Esophagus muscularis mucosa (tissue), 4 donors: ENCODE measurements at regions of chr11 and their contacts with region 1.

Region 1: DNA sequence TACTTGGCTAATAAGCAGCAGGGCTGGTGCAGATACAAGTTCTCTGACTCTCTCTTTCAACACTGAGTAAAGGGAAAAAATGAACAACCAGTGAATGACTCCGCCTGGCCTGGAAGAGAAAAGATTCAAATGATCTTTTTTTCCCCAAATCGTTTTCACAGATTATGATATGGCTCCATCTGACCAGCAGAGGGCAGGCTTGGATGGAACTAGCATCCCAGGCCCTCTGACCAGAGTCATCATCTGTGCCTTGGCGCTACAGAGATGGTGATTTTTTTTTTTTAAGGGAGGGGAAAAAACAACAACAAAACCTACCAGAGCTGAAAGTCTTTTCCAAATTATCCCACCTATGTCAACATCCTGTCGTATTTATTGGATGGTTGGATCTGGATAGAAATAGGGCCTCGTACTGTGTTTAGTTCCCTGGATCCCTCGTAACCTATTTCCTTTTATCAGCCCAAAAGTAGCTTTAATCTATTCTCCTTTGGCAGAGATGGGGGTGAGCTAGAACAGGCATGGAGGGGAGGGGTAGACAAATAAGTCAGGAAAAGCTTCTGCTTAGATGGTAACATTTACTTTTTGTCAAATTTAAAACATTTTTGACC is 69.7 kb downstream of the PRSS23 start:
- DNase-seq: no peak
- H3K4me3 ChIP-seq: no peak overlapping the region
- H3K27ac ChIP-seq: no peak overlapping the region
- H3K4me1 ChIP-seq: peaks cover 0 to 10% (median 0%) of the 10 kb centered on the region in 4 donors
- H3K27me3 ChIP-seq: no peaks in the 10 kb centered on the region
- CTCF ChIP-seq: peak; percentile 76 to 85 (median 79)
- EP300 ChIP-seq: no peak
- POLR2A ChIP-seq: no peak

Region 2: GRCh38 chr11:86460461-86461385 is 409.3 kb before region 1 on chr11:
- intact Hi-C with region 1: no loop called
- DNase-seq: no peak
- H3K4me3 ChIP-seq: no peak overlapping the region
- H3K27ac ChIP-seq: peak overlapping the region in 2 of 4 donors; percentile 24 to 45
- H3K4me1 ChIP-seq: peaks cover 23 to 56% (median 44%) of the 10 kb centered on the region in 4 donors
- H3K27me3 ChIP-seq: peaks cover 0 to 4% (median 0%) of the 10 kb centered on the region in 4 donors
- CTCF ChIP-seq: no peak
- EP300 ChIP-seq: no peak
- POLR2A ChIP-seq: no peak

Region 3: GRCh38 chr11:86706321-86706720 is 163.7 kb before region 1 on chr11:
- intact Hi-C with region 1: no loop called
- DNase-seq: no peak
- H3K4me3 ChIP-seq: no peak overlapping the region
- H3K27ac ChIP-seq: peak overlapping the region in 3 of 4 donors; percentile 38 to 61 (median 56)
- H3K4me1 ChIP-seq: peaks cover 0 to 15% (median 12%) of the 10 kb centered on the region in 4 donors
- H3K27me3 ChIP-seq: no peaks in the 10 kb centered on the region
- CTCF ChIP-seq: no peak
- EP300 ChIP-seq: no peak
- POLR2A ChIP-seq: no peak

Region 4: DNA sequence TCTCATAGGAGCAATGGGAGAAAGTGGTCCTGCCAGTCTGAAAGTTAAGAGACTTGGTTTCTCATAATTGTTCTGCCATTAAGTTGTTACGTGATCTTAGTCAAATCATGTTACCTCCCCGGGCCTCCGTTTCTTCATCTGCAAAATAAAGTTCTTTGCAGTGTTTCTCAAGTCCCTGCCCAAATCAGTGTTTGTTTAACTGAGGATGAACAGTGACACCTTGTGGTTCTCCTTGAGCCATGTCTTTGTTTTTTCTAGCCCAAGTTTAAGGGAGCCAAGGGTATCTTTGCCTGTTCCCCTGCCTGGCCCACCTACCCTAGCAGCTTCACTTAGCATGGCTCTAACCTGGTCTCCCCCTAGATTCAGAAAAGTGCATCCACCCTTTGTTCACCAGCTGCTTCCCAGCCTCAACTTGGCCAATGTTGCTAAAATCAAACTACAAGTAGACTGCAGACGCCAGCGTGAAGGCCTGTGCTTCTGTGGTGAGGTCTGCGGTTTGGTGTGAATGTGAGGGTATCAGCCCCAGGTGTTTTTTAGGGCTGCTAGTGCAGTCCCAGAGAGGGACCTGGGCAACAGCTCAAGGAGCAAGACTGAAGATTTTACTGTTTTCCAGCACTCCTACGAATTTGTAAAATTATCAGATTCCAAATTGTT is 49.6 kb after region 1 on chr11:
- intact Hi-C with region 1: loop called (anchors 2 kb)
- DNase-seq: no peak
- H3K4me3 ChIP-seq: no peak overlapping the region
- H3K27ac ChIP-seq: peak overlapping the region in 3 of 4 donors; percentile 10 to 40 (median 31)
- H3K4me1 ChIP-seq: peaks cover 19 to 36% (median 34%) of the 10 kb centered on the region in 4 donors
- H3K27me3 ChIP-seq: no peaks in the 10 kb centered on the region
- CTCF ChIP-seq: peak; percentile 58 to 67 (median 60)
- EP300 ChIP-seq: no peak
- POLR2A ChIP-seq: no peak

Region 5: DNA sequence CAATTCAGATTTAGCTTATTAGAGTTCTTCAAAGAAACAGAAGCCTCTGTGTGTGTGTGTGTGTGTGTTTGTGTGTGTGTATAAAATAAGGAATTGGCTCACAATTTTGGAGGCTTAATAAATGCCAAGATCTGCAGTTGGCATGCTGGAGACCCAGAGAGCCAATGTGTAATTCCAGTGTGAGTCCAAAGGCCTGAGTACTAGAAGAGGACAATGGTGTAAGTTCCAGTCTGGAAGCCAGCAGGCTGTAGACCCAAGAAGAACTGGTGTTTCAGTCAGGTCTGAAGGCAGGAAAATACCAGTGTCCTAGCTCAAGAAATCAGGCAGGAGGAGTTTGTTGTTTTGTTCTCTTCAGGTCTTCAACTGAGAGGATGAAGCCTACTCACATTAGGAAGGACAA is 187.7 kb after region 1 on chr11:
- intact Hi-C with region 1: no loop called
- DNase-seq: no peak
- H3K4me3 ChIP-seq: no peak overlapping the region
- H3K27ac ChIP-seq: no peak overlapping the region
- H3K4me1 ChIP-seq: no peaks in the 10 kb centered on the region
- H3K27me3 ChIP-seq: no peaks in the 10 kb centered on the region
- CTCF ChIP-seq: no peak
- EP300 ChIP-seq: no peak
- POLR2A ChIP-seq: no peak